Mammary epithelial cell (primary cell): ENCODE measurements at regions of chr17 and their contacts with region 1.

Region 1: GRCh38 chr17:77287432-77288071 is 146.8 kb downstream of the SEC14L1 start:
- DNase-seq: peak; percentile 80
- H3K4me3 ChIP-seq: peak overlapping the region; percentile 2 to 31 (median 30)
- H3K27ac ChIP-seq: peak overlapping the region; percentile 99
- H3K4me1 ChIP-seq: peaks cover 62% of the 10 kb centered on the region
- H3K27me3 ChIP-seq: no peaks in the 10 kb centered on the region
- CTCF ChIP-seq: no peak

Region 2: GRCh38 chr17:77306790-77307478 is 19.4 kb after region 1 on chr17:
- CTCF ChIA-PET with region 1: no interaction called
- dilution Hi-C with region 1: no loop called
- in situ Hi-C with region 1: no loop called
- intact Hi-C with region 1: loop called (anchors 1 kb)
- DNase-seq: no peak
- H3K4me3 ChIP-seq: no peak overlapping the region
- H3K27ac ChIP-seq: no peak overlapping the region
- H3K4me1 ChIP-seq: peaks cover 62% of the 10 kb centered on the region
- H3K27me3 ChIP-seq: no peaks in the 10 kb centered on the region
- CTCF ChIP-seq: no peak